Lower leg skin (tissue), 4 donors: ENCODE measurements at regions of chr9 and their contacts with region 1.

Region 1: DNA sequence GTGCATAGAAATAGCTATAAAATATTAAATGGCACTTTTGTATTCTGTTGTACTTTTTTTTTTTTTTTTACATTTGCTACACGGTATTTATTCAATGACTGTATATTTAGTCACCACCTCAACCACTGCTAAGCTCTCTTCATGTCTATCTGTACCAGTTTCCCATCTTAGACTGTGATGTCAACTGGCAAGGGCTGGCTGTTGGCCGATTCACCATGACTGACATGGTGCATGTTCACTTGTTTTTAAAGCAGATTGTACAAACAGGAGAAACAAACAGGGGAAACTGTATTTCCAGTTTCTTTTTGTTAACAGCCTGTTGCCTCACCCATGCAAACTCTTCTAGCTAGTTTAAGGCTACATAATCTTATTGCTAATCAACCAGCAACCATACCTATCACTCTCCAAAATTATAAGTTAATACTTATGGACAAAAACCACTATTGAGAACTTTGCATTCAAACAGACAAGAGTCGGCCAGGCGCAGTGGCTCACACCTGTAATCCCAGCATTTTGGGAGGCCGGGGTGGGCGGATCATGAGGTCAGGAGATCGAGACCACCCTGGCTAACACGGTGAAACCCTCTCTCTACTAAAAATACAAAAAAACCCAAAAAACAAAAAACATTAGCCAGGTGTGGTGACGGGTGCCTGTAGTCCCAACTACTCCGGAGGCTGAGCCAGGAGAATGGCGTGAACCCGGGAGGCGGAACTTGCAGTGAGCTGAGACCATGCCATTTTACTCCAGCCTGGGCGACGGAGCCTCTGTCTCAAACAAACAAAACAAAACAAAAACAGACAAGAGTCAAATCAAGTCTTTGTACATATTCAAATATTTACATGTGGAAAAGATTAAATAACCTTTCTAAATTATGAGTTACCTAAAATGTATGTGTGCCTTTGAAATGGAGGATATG is 13.2 kb downstream of the ZFAND5 start:
- DNase-seq: no peak
- H3K4me3 ChIP-seq: no peak overlapping the region
- CTCF ChIP-seq: no peak
- POLR2A ChIP-seq: no peak

Region 2: DNA sequence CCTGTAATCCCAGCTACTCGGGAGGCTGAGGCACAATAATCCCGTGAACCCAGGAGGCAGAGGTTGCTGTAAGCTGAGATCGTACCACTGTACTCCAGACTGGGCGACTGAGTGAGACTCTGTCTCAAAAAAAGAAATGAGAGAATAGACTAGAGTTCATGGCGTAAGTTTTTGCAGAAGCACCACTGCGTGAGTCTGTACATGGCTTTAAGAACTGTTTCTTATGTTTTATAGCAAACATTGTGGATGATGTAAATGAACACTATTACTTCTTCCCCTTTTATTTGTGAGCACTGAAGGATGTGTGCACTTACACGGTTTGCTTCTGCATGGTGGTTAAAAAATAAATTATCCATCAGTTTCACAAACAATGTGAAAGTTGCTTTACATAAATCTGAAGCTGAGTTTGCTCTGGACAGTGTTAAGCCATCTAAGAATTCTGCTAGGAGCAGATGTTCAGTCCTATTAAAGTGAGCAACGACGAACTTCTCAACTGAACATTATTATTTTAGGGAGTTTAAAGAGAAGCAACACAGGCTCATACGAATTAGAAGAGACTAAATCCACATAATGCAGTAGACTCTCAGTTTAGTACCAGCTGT is 39.3 kb before region 1 on chr9:
- intact Hi-C with region 1: loop called (anchors 1 kb)
- DNase-seq: no peak
- H3K4me3 ChIP-seq: no peak overlapping the region
- CTCF ChIP-seq: no peak
- POLR2A ChIP-seq: no peak

Region 3: DNA sequence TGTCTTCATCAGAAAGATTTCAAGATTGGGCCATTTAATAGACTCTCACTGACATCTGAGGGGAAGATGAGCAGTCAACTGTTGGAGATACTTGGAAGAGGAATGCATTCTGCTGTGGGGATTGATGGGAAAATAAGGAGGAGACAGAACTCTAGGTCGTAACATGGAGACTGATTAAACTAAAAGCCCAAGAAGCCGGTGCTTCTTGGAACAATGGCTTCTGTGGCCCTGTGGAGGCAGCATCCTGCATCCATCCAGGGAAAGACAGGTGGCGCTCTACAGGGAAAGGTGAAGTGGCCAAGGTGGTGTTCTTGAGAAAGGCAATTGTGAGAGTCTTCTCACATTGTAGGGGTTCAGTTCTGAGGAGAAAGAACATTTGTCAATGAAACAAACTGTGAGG is 18.1 kb before region 1 on chr9:
- intact Hi-C with region 1: no loop called
- DNase-seq: no peak
- H3K4me3 ChIP-seq: no peak overlapping the region
- CTCF ChIP-seq: no peak
- POLR2A ChIP-seq: no peak